ENCODE measurements at regions of chr15 and their contacts with region 1.

Region 1: DNA sequence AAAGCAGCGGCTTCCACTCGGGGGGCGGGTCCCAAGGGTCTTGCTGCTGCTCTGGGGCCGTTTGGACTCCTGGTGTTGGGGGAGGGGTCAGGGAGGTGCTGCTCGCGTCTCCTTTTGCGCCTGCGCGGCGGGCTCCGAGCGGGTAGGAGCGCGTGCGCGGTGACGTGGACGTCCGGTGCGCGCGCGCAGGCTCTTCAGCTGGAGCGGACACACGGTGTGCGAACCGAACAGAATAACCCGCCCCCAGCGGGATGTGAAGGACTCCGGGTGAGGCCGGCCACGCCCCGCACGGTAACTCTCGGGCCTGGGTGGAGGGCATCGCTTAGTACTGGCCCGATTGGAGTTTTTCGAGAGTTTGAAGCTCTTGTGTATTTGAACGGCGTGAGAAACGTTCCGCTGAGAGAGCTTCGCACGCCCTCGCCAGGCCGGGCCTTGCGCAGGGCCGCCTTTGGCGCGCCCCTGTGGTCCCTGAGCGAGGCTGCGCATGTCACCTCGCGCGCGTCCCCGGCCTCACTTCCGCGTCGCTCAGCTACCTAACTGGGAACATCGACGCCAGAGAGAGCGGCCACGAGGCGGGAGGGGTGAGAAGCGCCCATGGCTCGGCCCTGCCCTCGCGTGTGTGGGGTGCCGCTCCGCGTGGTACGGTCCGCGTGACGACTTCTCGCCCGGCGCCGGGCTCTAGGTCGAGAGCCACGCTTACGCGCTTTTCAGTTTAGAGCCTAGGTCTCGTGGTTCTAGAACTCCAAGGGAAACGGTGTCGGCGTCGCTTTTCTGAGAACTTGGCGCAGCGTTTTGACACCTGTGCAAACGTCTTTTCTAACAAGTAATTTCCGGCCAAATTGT is at the start of gene MGA:
- DNase-seq: peak; percentile 88
- H3K4me3 Mint-ChIP-seq: peak within 1 kb of the TSS; percentile 90
- H3K27ac Mint-ChIP-seq: peak within 1 kb of the TSS; percentile 91
- H3K4me1 Mint-ChIP-seq: peaks cover 37% of the 10 kb centered on the region
- H3K27me3 Mint-ChIP-seq: peaks cover 28% of the 10 kb centered on the region
- total RNA-seq, gene MGA: 37.5 and 38.8 TPM in 2 replicates

Region 2: DNA sequence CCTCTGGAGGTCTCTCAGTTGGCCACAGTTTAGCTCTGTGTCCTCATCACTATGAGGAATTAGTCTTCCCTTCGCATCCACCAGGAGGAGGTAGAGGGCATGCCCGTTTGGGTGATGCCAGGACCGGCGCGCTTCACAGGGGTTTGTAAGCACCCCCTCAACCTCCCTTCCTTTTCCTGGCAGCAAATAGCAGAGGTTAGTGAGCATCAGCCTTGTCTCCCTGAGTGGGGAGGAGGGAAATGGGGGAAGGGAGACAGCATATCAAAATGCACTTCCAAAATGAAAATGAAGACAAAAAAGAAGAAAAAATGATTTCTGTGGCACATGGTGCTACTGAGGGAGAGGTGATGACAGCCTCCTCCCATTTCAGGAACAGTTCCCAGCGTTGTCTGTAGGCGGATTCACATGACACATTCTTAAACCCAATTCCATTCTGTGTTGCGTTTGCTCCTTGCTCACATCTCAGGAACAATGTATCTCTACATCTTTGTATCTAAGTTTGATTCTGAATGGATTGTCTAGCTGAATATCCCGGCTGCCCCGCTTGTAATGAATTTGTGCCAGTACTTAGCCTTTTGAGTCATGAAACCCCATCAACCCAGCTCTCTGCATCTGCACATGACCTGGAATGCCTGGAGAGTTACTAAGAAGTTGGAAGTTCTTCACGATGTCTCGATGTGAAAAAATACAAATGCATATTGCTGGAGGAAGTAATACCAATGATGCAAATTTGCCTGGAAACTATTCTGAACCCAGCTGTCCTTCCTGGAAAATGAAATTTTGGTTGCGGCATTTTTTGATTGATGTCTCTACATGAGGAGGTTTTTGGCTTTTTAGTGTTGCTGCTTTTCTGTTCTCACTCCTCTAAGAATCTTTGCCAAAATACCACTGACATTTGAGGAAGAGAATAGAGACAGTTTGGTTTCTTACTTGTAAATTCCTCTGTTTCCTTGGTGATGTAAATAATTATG is 56.2 kb before region 1 on chr15:
- intact Hi-C with region 1: no loop called
- DNase-seq: peak; percentile 27
- H3K4me3 Mint-ChIP-seq: peak overlapping the region; percentile 68
- H3K27ac Mint-ChIP-seq: no peak overlapping the region
- H3K4me1 Mint-ChIP-seq: peaks cover 11% of the 10 kb centered on the region
- H3K27me3 Mint-ChIP-seq: peaks cover 34% of the 10 kb centered on the region

Region 3: DNA sequence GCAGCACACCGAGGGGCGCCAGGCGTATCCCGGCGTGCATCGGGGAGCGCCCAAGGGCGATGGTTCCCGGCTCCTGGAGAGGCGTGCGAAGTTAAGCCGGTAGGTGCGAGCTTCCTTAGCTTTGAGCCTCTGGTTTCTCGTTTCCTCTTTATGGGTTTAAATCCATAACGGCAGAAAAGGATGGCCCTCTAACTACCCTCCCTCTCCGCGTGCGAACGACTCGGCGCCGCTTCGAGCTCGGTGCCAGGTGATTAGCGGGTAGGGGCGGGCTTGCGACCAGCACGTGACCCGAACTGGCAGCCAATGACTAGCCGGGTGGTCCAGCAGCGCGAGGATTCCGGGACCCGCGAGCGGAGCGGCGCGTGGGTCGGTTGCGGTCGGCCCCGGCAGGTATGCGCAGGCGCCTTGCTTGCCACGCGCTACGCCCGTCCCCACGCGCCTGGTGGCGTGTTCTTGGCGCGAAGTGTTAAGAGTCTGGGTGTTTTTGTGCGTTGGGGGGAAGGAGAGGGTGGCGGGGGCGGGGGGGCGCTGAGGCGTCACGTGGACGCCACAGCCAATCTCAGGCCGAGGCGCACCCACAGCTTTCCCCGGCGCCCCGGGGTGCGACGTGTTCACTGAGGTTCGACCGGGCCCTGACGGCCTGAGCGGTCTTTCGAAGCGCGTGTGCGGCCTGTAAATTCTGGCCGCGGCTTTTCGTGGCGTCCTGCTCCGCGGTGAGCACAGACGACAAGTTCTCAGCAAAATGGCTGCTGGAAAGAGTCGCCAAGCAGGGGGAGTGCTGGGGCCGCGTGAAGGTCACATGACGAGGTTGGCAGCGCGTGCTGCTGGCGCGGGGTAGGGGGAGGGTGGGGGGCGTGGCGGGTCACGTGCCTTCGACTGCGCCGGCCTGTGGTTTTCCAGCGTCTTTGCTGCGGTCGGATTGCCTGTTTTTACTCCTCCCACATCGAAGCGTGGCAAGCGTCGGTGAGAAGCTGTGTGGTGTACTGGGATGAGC is 39.0 kb before region 1 on chr15:
- intact Hi-C with region 1: loop called (anchors 1 kb)
- DNase-seq: peak; percentile 70
- H3K4me3 Mint-ChIP-seq: peak overlapping the region; percentile 78
- H3K27ac Mint-ChIP-seq: peak overlapping the region; percentile 81
- H3K4me1 Mint-ChIP-seq: peaks cover 12% of the 10 kb centered on the region
- H3K27me3 Mint-ChIP-seq: peaks cover 22% of the 10 kb centered on the region

Region 4: DNA sequence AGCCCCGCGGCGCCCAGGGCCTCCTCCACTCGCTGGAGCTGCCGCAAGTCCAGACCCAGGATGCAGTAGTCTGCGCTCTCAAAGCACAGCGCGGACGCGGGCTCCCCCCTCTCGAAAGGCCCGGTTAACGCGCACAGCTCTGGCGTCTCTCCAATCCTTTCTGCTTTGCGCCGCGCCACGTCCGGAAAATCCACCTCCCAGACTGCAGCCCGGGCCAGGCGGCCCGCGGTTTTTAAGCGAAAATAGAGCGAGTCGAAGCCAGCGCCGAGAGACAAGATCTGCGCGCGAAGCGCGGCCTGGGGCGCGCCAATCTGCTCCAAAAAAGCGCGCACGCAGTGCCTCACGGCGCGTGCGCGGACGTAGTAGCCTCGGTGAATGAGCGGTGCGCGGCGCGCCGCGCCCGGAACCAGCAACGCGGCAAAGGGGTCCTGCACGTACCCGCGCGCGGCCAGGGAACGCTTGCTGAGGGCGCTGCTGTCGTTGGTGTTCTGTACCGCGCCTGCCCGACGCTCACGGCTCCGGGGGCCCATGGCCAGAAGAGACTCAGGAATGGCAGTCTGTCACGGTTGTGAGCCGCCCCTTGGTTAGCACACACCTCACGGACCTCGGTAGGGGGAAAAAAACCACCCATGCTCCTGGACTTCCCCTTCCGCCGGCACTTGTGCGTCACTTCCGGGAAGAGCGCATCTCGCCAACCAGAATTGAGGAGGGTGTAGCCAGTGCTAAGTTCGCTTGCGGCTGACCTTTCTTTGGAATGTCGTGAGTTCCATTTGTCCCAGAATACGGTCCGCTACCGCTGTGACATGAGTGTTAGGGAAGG is 1669.7 kb after region 1 on chr15 and contains the start of gene LCMT2:
- intact Hi-C with region 1: loop called (anchors 10 kb)
- DNase-seq: peak; percentile 86
- H3K4me3 Mint-ChIP-seq: peak within 1 kb of the TSS; percentile 87
- H3K27ac Mint-ChIP-seq: peak within 1 kb of the TSS; percentile 94
- H3K4me1 Mint-ChIP-seq: peaks cover 40% of the 10 kb centered on the region
- H3K27me3 Mint-ChIP-seq: no peaks in the 10 kb centered on the region
- total RNA-seq, gene LCMT2: 15.4 and 15.7 TPM in 2 replicates